Astrocyte of the cerebellum (primary cell): ENCODE measurements at regions of chr2 and their contacts with region 1.

Region 1: GRCh38 chr2:62410015-62410453 is 96.0 kb downstream of the TMEM17 start:
- DNase-seq: no peak
- H3K4me3 ChIP-seq: no peak overlapping the region
- CTCF ChIP-seq: peak; percentile 24

Region 2: GRCh38 chr2:62354771-62355550 is 55.1 kb before region 1 on chr2:
- in situ Hi-C with region 1: no loop called
- DNase-seq: no peak
- H3K4me3 ChIP-seq: no peak overlapping the region
- CTCF ChIP-seq: no peak

Region 3: DNA sequence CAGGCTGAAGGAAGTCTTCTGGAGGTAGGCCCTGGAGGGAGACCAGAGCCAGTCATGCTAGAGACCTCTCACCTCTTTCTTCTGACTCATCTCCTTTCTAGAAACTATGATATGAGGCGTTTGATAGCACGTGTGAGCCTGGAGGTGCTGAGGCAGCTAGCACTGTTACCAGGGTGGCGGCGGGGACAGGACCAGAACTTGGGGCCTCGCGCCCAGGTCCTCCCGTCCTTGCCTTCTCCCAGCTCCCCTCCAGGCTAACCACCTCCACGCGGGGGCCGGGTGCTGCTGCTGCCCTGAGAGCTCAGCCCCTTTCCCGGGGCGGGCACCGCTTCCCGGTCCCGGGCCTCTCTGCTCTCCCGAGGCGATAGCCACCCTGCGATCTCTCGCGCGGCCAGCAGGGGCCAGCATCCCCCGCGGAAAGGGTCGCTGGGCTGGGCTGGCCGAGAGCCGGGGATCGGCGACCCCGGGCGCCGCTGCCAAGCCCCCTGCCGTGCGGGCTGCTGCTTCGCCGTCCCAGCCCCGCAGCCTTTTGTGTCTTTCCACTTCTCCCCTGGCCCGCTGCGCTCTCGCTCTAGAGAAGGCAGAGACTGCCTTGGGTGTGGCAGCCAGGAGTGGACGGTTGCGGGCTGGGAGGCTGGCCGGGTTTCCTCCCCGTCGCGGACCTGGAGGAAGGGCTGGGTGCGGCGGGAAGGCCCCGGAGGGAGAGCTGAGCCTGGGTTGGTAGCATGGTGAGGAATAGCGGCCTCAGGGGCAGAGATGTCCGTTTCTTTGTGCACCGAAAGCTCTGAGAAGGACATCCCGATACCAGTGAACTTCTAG is 46.9 kb after region 1 on chr2:
- in situ Hi-C with region 1: loop called (anchors 5 kb)
- DNase-seq: no peak
- H3K4me3 ChIP-seq: peak overlapping the region; percentile 49
- CTCF ChIP-seq: peak; percentile 83